ENCODE measurements at regions of chr19 and their contacts with region 1.

Region 1: DNA sequence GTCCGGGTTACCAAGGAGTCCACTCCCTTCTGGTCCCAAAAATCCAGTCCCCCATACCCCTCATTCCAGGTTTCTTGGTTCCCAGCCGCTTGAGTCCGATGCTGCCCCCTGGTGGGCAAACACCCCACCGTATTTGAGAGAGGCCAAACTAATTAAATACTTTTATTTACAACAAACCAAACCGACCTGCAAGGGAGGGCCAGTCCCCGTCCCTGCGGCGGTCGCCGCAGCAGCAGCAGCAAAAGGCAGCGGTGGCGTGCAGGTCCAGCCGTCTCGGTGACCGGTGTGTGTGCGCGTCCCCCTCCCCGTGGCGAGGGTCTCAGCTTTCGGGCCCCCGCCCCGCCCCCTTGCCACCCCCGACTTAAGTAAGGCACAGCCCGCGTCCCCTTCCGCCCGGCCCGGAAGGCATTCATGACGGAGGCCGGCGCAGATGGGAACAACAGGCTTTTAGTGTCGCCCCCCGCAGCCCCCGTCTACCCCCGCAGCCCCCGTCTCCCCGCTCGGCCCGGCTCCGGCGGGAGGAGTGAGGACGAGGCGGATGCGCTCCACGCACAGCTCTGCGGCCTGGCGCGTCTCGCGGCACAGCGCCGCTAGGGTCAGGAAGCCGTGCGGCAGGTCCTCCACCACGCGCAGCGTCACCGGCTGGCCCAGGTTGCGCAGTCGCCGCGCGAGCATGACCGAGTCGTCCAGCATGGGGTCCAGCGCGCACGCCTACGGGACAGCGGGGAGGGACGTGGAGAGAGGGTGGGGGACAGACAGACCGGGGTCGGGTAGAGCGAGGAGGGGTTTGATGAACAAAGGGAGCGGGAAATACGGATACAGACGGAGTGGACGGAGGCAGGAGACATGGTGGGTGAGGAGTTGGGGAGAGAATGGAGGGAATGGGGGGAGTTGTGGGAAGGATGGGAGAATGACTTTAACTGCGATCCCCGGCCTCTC is 11.5 kb upstream of the CNFN start:
- DNase-seq: no peak
- ATAC-seq: peak; percentile 69
- H3K4me3 ChIP-seq: peak overlapping the region; percentile 60
- H3K27ac ChIP-seq: no peak overlapping the region
- H3K4me1 ChIP-seq: peaks cover 5% of the 10 kb centered on the region
- H3K27me3 ChIP-seq: no peaks in the 10 kb centered on the region
- CTCF ChIP-seq: peak; percentile 73 to 76 (median 74)
- EP300 ChIP-seq: no peak
- POLR2A ChIP-seq: peak; percentile 72
- RAD21 ChIP-seq: peak; percentile 47

Region 2: GRCh38 chr19:42386974-42387707 is 14.5 kb before region 1 on chr19:
- CTCF ChIA-PET with region 1: interaction called, 11 read pairs
- POLR2A ChIA-PET with region 1: interaction called, 5 read pairs
- RAD21 ChIA-PET with region 1: interaction called, 3 read pairs
- SMC1A ChIA-PET with region 1: interaction called, 5 read pairs
- in situ Hi-C with region 1: no loop called
- intact Hi-C with region 1: no loop called
- DNase-seq: no peak
- ATAC-seq: peak; percentile 95
- H3K4me3 ChIP-seq: peak overlapping the region; percentile 49; the same call in 1 of the 2 replicates
- H3K27ac ChIP-seq: no peak overlapping the region
- H3K4me1 ChIP-seq: no peaks in the 10 kb centered on the region
- H3K27me3 ChIP-seq: peaks cover 0 to 2% of the 10 kb centered on the region in 2 experiments; a peak in 2 of 4 replicates
- CTCF ChIP-seq: peak; percentile 28 to 65 (median 51); a peak in 5 of 6 replicates
- EP300 ChIP-seq: no peak
- POLR2A ChIP-seq: peak; percentile 53; the same call in 1 of the 2 replicates
- RAD21 ChIP-seq: no peak

Region 3: DNA sequence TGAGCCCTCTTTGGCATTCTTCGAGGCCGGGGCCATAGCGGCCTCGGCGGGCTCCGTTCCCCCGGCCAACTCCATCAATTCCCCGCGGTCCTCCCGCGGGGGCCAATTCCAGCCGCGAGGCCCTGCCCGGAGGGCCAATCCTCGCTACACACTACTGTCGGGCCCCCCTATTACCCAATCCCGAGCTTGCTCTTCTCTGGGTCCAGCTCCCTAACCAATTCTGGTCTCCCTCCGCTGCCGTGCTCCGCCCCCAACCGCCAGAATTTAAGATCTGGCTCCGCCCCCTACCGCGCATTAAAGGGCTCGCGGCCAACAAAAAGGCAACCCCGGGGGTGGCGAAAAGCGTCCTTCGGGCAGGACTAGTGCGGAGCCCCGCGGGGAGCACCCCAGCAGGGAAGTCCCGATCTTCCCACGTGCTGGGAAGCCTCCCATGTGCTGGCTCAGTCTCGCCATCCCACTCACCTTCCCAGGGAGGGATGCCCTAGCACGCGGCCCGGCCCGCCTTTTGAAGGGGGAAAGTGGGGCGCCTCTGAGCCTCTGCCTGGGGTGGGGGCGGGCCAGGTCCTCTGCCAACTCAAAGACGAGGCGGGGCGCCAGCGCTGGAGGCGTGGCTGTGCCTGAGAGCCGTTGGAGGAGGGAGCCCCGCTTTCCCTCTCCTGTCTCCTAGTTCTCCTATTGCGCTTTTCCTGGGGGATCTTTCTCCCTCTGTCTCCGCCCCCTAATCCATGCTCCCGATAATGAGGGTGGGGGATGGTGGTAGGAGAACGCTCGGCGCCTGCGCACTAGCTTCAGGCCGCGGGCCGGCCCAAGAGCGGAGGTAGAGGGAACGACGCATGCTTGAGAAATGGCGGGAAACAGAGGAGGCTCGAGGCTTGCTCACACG is 22.1 kb after region 1 on chr19:
- CTCF ChIA-PET with region 1: interaction called, 22 read pairs
- POLR2A ChIA-PET with region 1: interaction called, 8 read pairs
- RAD21 ChIA-PET with region 1: interaction called, 4 read pairs
- SMC1A ChIA-PET with region 1: interaction called, 8 read pairs
- in situ Hi-C with region 1: no loop called
- intact Hi-C with region 1: no loop called
- DNase-seq: no peak
- ATAC-seq: peak; percentile 96
- H3K4me3 ChIP-seq: peak overlapping the region; percentile 94
- H3K27ac ChIP-seq: peak overlapping the region; percentile 86
- H3K4me1 ChIP-seq: peaks cover 16% of the 10 kb centered on the region
- H3K27me3 ChIP-seq: no peaks in the 10 kb centered on the region
- CTCF ChIP-seq: no peak
- EP300 ChIP-seq: no peak
- POLR2A ChIP-seq: peak; percentile 69
- RAD21 ChIP-seq: no peak